ENCODE measurements at regions of chr9 and their contacts with region 1.

Region 1: DNA sequence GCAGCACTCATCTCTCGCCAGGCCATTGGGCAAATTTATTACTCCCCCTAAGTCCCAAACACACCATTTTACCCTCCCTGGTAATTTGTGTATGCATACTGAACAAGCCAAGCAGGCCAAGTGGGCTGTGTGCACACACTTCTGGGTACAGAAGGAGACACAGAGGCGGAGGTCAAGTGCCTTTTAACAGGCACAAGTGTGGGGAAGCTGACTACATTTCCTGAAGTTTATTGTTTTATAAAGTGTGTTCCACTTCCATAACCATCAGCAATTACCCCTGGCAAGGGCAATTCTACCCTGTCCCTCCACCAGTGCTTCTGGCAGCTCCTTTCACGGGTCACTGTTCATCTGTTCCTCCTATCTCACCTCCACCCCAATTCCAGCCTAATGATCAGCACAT is 93.9 kb downstream of the SETX start:
- DNase-seq: no peak
- ATAC-seq: no peak
- H3K4me3 Mint-ChIP-seq: no peak overlapping the region
- H3K27ac Mint-ChIP-seq: no peak overlapping the region
- H3K4me1 Mint-ChIP-seq: no peaks in the 10 kb centered on the region
- H3K27me3 Mint-ChIP-seq: no peaks in the 10 kb centered on the region
- CTCF ChIP-seq: no peak

Region 2: DNA sequence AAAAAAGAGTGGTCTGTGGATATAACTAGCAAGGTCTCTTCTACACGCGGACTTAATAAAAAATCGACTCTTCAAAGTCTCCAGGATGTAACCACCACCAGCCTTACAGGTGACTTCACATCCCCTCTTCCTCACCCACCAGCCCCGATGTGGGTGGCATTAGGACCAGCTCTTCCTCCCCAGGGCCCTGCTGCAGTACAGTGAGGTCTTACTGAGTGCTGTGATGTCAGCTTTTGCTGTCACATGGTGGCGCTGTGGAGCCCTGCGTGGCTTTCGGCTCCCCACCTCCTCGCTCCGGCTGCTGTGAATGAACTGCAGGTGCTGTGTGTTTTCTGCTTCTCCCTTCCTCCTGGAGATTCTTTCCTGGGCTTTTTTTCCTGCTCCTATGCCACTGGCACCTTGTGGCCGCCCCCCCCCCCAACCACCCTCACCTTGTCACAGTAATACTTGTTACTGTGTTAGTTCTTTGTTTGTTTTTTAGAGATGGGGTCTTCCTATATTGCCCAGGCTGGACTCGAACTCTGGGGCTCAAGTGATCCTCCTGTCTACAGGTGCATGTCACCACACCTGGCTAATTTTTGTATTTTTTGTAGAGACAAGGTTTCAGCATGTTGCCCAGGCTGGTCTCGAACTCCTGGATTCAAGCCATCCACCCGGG is 505.2 kb before region 1 on chr9:
- CTCF ChIA-PET with region 1: interaction called, 14 read pairs
- POLR2A ChIA-PET with region 1: no interaction called
- DNase-seq: peak; percentile 92
- ATAC-seq: peak; percentile 93
- H3K4me3 Mint-ChIP-seq: no peak overlapping the region
- H3K27ac Mint-ChIP-seq: peak overlapping the region; percentile 98
- H3K4me1 Mint-ChIP-seq: peaks cover 11% of the 10 kb centered on the region
- H3K27me3 Mint-ChIP-seq: peaks cover 2% of the 10 kb centered on the region; the same call in 1 of the 2 replicates
- CTCF ChIP-seq: peak; percentile 80

Region 3: GRCh38 chr9:131762356-131762932 is 498.4 kb before region 1 on chr9:
- CTCF ChIA-PET with region 1: interaction called, 14 read pairs
- POLR2A ChIA-PET with region 1: no interaction called
- DNase-seq: peak; percentile 92
- ATAC-seq: peak; percentile 100
- H3K4me3 Mint-ChIP-seq: peak overlapping the region; percentile 13; the same call in 1 of the 2 replicates
- H3K27ac Mint-ChIP-seq: no peak overlapping the region
- H3K4me1 Mint-ChIP-seq: no peaks in the 10 kb centered on the region
- H3K27me3 Mint-ChIP-seq: no peaks in the 10 kb centered on the region
- CTCF ChIP-seq: peak; percentile 98

Region 4: GRCh38 chr9:131918481-131918880 is 342.4 kb before region 1 on chr9:
- CTCF ChIA-PET with region 1: no interaction called
- POLR2A ChIA-PET with region 1: no interaction called
- DNase-seq: no peak
- ATAC-seq: no peak
- H3K4me3 Mint-ChIP-seq: no peak overlapping the region
- H3K27ac Mint-ChIP-seq: no peak overlapping the region
- H3K4me1 Mint-ChIP-seq: peaks cover 12% of the 10 kb centered on the region
- H3K27me3 Mint-ChIP-seq: no peaks in the 10 kb centered on the region
- CTCF ChIP-seq: no peak

Region 5: GRCh38 chr9:132182314-132183091 is 78.3 kb before region 1 on chr9:
- CTCF ChIA-PET with region 1: interaction called, 20 read pairs
- POLR2A ChIA-PET with region 1: no interaction called
- DNase-seq: no peak
- ATAC-seq: peak; percentile 62
- H3K4me3 Mint-ChIP-seq: no peak overlapping the region
- H3K27ac Mint-ChIP-seq: no peak overlapping the region
- H3K4me1 Mint-ChIP-seq: peaks cover 49% of the 10 kb centered on the region
- H3K27me3 Mint-ChIP-seq: peaks cover 22% of the 10 kb centered on the region
- CTCF ChIP-seq: no peak

Region 6: DNA sequence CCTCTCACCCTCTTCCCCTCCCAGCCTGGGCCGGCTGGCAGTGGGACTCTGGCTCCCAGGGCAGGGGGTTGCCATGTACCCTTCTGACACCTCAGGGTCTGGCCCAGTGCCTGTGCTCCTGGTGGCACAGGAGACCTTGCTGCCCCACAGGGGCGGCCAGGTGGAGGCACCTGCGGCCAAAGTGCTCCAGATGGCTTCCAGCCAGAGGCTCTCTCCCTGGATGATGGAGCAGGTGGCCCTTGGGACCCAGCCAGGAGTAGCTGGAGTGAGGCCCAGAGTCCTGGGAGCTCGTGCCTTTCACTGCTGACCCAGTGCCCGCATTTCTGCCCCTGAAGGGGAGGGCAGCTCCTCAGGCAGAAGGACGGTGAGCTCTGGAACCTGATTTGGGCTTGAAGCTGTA is 11.7 kb before region 1 on chr9:
- CTCF ChIA-PET with region 1: interaction called, 26 read pairs
- POLR2A ChIA-PET with region 1: no interaction called
- DNase-seq: no peak
- ATAC-seq: no peak
- H3K4me3 Mint-ChIP-seq: no peak overlapping the region
- H3K27ac Mint-ChIP-seq: no peak overlapping the region
- H3K4me1 Mint-ChIP-seq: peaks cover 13% of the 10 kb centered on the region
- H3K27me3 Mint-ChIP-seq: peaks cover 20% of the 10 kb centered on the region
- CTCF ChIP-seq: no peak

Region 7: GRCh38 chr9:132319421-132320110 is 58.7 kb after region 1 on chr9:
- CTCF ChIA-PET with region 1: interaction called, 10 read pairs
- POLR2A ChIA-PET with region 1: no interaction called
- DNase-seq: no peak
- ATAC-seq: peak; percentile 65
- H3K4me3 Mint-ChIP-seq: peak overlapping the region; percentile 1; the same call in 1 of the 2 replicates
- H3K27ac Mint-ChIP-seq: peak overlapping the region; percentile 42
- H3K4me1 Mint-ChIP-seq: peaks cover 18% of the 10 kb centered on the region
- H3K27me3 Mint-ChIP-seq: no peaks in the 10 kb centered on the region
- CTCF ChIP-seq: no peak

Region 8: GRCh38 chr9:132354637-132355355 is 94.0 kb after region 1 on chr9 and contains the start of gene SETX:
- CTCF ChIA-PET with region 1: interaction called, 16 read pairs
- POLR2A ChIA-PET with region 1: no interaction called
- DNase-seq: peak; percentile 97
- ATAC-seq: peak; percentile 97
- H3K4me3 Mint-ChIP-seq: peak within 1 kb of the TSS; percentile 92
- H3K27ac Mint-ChIP-seq: peak within 1 kb of the TSS; percentile 95
- H3K4me1 Mint-ChIP-seq: peaks cover 21% of the 10 kb centered on the region
- H3K27me3 Mint-ChIP-seq: no peaks in the 10 kb centered on the region
- CTCF ChIP-seq: no peak
- total RNA-seq, gene SETX: 26.0 to 30.1 TPM (median 26.7 TPM) in 3 replicates

Region 9: DNA sequence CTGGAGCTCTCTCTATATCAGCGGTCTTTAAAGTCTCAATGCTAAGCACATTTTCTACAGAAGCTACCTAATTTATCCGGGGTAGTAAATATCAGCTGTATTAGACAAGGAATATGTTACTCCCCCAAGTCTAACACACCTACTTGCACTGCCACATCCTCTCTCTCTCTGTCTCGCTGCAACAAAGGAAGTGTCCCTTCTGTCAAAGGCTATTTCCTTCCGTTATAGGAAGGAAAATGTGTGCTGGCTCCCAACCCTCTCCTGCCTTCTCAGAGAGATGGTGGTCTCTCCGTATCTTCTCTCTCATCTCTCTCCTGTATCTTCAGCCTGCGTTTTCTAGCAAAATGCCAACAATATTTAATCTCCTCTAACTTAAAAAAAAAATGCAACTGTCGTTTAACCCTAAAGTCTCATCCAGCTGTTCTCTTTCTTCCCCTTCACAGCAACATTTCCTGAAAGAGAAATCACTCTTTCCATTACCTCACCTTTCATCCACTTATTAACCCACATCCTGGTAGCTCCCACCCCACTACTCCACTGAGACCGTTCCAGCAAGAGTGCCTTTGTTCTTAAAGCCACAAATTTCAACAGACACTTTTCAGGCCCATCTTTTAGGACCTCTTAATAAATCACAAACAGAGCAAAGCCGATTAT is 143.5 kb after region 1 on chr9:
- CTCF ChIA-PET with region 1: no interaction called
- POLR2A ChIA-PET with region 1: no interaction called
- DNase-seq: no peak
- ATAC-seq: no peak
- H3K4me3 Mint-ChIP-seq: peak overlapping the region; percentile 87; the same call in 1 of the 2 replicates
- H3K27ac Mint-ChIP-seq: no peak overlapping the region; the same call in 1 of the 2 replicates
- H3K4me1 Mint-ChIP-seq: peaks cover 14% of the 10 kb centered on the region
- H3K27me3 Mint-ChIP-seq: peaks cover 16% of the 10 kb centered on the region
- CTCF ChIP-seq: no peak

Measured in WTC11 (cell line).